ENCODE measurements at regions of chr13 and their contacts with region 1.

Region 1: DNA sequence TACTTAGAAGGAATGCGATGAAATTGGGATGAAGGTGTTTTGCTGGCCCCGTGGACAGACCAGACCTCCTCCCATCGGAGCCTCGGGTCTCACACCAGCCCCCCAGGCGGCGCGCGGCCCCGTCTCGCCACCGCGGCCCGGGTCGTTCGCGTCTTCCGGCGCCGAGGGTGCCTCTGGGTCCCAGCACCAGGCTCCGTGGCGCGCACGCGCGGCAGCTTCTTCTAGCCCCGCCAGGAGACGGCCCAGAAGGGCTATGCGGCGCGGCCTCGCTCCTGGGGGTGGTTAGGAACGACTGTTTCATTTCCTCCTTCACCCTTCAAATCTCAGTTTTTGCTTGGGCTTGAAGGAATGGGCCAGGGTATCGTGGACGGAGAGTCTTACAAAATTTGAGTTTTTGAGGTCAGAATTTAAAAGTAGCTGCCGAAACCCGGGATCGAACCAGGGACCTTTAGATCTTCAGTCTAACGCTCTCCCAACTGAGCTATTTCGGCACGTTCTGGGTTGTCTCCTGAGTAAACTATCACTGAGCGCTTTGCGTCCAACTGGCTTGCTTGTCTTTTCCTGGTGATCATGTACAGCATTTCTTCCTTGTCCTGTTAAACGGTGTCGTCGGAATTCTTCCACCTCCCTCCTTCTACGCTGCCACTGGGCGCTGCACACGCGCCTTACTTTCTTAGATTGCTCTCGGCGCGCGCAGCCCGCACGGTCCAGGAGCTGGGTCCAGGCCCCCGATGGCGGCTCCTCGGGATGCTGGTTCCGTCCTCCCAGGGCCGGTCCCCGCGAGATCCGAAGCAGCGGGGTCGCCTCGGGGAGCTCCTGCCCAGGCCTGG is 46.5 kb downstream of the TGDS start:
- DNase-seq: peak; percentile 92 to 94 (median 93)
- H3K4me3 ChIP-seq: peak overlapping the region; percentile 63 to 98
- H3K4me3 Mint-ChIP-seq: peak overlapping the region; percentile 88 to 95 (median 93)
- H3K27ac ChIP-seq: peak overlapping the region; percentile 87
- H3K27ac Mint-ChIP-seq: peak overlapping the region; percentile 94 to 100 (median 96)
- H3K4me1 ChIP-seq: peaks cover 15% of the 10 kb centered on the region
- H3K4me1 Mint-ChIP-seq: peaks cover 11 to 26% (median 17%) of the 10 kb centered on the region in 4 donors
- H3K27me3 ChIP-seq: no peaks in the 10 kb centered on the region
- H3K27me3 Mint-ChIP-seq: peaks cover 2 to 5% of the 10 kb centered on the region in 2 donors

Region 2: DNA sequence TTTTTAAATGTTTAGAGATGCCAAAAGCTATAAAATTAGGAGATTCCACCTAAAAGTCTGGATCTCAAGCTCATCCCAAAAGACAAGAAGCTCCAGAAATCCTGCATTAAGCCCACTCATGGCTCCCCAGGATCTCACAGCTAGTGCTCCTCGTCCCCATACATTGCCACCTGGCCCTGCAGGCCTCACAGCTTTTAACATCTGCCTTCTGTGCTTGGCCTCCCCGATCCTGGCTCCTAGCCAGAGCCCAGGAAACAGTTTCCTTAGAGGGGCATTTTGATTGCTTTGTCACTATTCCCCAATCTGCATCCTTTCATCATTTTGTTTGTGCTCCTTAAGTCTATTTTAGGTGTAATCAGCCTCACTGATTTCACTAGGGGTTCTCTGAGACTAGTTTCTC is 55.4 kb before region 1 on chr13:
- CTCF ChIA-PET with region 1: no interaction called
- POLR2A ChIA-PET with region 1: no interaction called
- intact Hi-C with region 1: no loop called
- DNase-seq: no peak
- H3K4me3 ChIP-seq: no peak overlapping the region
- H3K4me3 Mint-ChIP-seq: no peak overlapping the region
- H3K27ac ChIP-seq: no peak overlapping the region
- H3K27ac Mint-ChIP-seq: no peak overlapping the region
- H3K4me1 ChIP-seq: no peaks in the 10 kb centered on the region
- H3K4me1 Mint-ChIP-seq: no peaks in the 10 kb centered on the region
- H3K27me3 ChIP-seq: no peaks in the 10 kb centered on the region
- H3K27me3 Mint-ChIP-seq: no peaks in the 10 kb centered on the region

Region 3: DNA sequence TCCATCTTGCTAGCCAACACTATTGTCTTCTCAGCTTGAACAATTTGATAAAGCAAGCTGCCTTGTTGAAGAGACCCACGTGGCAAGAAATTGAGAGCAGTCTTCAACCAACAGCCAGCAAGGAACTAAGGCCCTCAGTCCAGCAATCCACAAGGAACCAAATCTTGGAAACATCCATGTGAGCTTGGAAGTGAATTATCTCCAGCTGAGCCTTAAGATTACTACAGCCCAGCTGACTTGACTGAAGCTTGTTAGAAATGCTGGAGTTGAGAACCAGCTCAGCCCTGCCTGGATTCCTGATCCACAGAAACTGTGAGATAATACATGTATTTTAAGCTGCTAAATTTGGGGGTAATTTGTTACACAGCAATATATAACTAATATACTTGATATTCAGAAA is 43.7 kb before region 1 on chr13:
- CTCF ChIA-PET with region 1: no interaction called
- POLR2A ChIA-PET with region 1: interaction called, 5 read pairs
- intact Hi-C with region 1: loop called (anchors 2 kb)
- DNase-seq: no peak
- H3K4me3 ChIP-seq: no peak overlapping the region
- H3K4me3 Mint-ChIP-seq: no peak overlapping the region
- H3K27ac ChIP-seq: no peak overlapping the region
- H3K27ac Mint-ChIP-seq: no peak overlapping the region
- H3K4me1 ChIP-seq: peaks cover 13% of the 10 kb centered on the region
- H3K4me1 Mint-ChIP-seq: peaks cover 4 to 14% (median 9%) of the 10 kb centered on the region in 4 donors
- H3K27me3 ChIP-seq: no peaks in the 10 kb centered on the region
- H3K27me3 Mint-ChIP-seq: peaks cover 7 to 13% of the 10 kb centered on the region in 2 donors

Region 4: GRCh38 chr13:94561126-94561525 is 11.7 kb after region 1 on chr13:
- CTCF ChIA-PET with region 1: interaction called, 5 read pairs
- POLR2A ChIA-PET with region 1: interaction called, 11 read pairs
- intact Hi-C with region 1: no loop called
- DNase-seq: no peak
- H3K4me3 ChIP-seq: no peak overlapping the region
- H3K4me3 Mint-ChIP-seq: no peak overlapping the region
- H3K27ac ChIP-seq: no peak overlapping the region
- H3K27ac Mint-ChIP-seq: peak overlapping the region in 1 of 7 donors; percentile 4
- H3K4me1 ChIP-seq: peaks cover 12% of the 10 kb centered on the region
- H3K4me1 Mint-ChIP-seq: peaks cover 14 to 20% (median 18%) of the 10 kb centered on the region in 4 donors
- H3K27me3 ChIP-seq: no peaks in the 10 kb centered on the region
- H3K27me3 Mint-ChIP-seq: no peaks in the 10 kb centered on the region

Region 5: GRCh38 chr13:94595950-94596574 is 46.6 kb after region 1 on chr13 and contains the start of gene TGDS:
- CTCF ChIA-PET with region 1: interaction called, 18 read pairs
- POLR2A ChIA-PET with region 1: interaction called, 96 read pairs
- intact Hi-C with region 1: loop called (anchors 1 kb)
- DNase-seq: peak; percentile 86 to 90 (median 88)
- H3K4me3 ChIP-seq: peak within 1 kb of the TSS; percentile 78 to 87
- H3K4me3 Mint-ChIP-seq: peak within 1 kb of the TSS; percentile 92 to 98 (median 94)
- H3K27ac ChIP-seq: peak within 1 kb of the TSS; percentile 75
- H3K27ac Mint-ChIP-seq: peak within 1 kb of the TSS; percentile 85 to 97 (median 94)
- H3K4me1 ChIP-seq: peaks cover 34% of the 10 kb centered on the region
- H3K4me1 Mint-ChIP-seq: peaks cover 28 to 43% (median 37%) of the 10 kb centered on the region in 4 donors
- H3K27me3 ChIP-seq: no peaks in the 10 kb centered on the region
- H3K27me3 Mint-ChIP-seq: no peaks in the 10 kb centered on the region
- total RNA-seq, gene TGDS: 15.9 to 16.8 TPM

Region 6: DNA sequence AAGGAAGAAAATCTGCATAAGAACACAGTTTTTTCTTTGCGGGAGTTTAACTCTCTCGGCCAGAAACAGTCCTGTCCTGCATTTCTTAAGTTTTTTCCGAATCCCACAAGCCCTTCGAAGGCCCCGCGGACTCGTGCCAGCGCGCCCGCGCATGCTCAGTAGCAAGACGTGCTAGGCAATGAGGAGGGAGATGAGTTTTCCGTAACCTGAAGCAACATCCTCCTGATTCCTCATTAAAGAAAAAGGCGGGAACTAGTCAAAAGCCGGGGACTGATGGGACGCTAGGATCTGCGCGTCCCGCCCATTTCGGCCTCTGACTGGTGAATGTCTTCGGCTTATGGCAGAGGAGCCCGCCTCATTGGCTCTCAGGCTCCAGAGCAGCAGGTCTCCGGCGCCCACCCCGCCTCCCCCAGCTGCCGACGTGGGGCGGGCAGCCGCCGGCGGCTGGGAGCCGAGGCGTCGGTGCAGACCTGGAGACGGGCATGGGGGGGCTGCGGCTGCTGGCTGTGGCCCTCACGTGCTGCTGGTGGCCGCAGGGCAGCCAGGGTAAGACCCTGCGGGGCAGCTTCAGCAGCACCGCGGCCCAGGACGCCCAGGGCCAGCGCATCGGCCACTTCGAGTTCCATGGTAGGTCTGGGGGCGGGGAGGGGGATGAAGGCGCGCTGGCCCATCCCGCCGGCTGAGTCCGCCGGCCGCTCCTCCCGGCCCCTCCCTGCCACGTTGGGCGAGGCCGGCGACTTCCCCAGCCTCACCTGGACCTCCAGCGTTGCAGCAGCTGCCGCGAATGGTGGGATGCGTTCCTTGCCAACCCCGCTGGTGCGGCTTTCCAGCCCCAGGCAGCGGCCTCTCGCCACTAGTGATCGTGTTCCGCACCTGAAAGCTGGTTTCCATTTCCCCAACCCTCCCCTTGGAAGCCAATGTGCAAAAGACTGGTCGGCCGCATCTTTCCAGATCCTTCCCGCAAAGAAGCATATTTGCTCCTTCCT is 52.3 kb after region 1 on chr13 and contains the start of gene GPR180:
- CTCF ChIA-PET with region 1: interaction called, 18 read pairs
- POLR2A ChIA-PET with region 1: interaction called, 96 read pairs
- intact Hi-C with region 1: loop called (anchors 1 kb)
- DNase-seq: peak; percentile 86 to 93 (median 89)
- H3K4me3 ChIP-seq: peak within 1 kb of the TSS; percentile 36 to 85
- H3K4me3 Mint-ChIP-seq: peak within 1 kb of the TSS; percentile 83 to 92 (median 86)
- H3K27ac ChIP-seq: peak within 1 kb of the TSS; percentile 57
- H3K27ac Mint-ChIP-seq: peak within 1 kb of the TSS; percentile 86 to 95 (median 92)
- H3K4me1 ChIP-seq: peaks cover 18% of the 10 kb centered on the region
- H3K4me1 Mint-ChIP-seq: peaks cover 22 to 36% (median 29%) of the 10 kb centered on the region in 4 donors
- H3K27me3 ChIP-seq: no peaks in the 10 kb centered on the region
- H3K27me3 Mint-ChIP-seq: no peaks in the 10 kb centered on the region
- total RNA-seq, gene GPR180: 4.8 to 5.3 TPM

Region 7: DNA sequence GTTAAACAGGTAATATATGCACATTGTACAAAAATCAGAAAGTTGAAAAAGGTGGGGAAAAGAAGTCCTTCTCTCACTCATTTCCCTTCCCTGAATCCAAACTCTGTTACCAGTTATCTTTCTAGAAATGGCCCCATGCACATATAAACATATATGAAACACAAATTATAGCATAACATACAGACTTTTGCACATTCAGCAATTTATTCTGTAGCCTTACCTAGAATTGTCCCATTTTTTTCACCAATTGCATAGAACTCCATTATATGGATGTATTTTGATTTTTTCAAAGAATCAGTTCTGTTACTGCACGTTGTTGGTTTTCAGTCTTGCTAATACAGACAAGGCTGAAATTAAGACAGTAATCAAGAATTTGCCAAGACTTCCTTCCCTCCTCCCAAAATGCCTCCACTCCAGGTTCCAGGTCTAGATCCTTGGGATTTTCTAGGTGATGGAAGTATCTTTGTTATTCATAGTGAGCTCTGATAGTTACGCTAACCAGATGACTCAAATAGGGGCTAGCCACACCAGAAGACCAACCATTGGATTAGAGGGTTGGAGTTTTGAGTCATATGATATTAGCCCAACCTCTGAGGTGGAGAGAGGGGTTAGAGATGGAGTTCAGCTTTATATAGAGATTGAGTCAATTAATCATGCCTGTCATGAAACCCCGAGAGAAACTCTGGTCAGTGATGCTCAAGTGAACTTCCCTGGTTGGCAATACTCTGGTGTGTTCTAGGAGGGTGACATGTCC is 83.0 kb after region 1 on chr13:
- CTCF ChIA-PET with region 1: no interaction called
- POLR2A ChIA-PET with region 1: no interaction called
- intact Hi-C with region 1: no loop called
- DNase-seq: no peak
- H3K4me3 ChIP-seq: no peak overlapping the region
- H3K4me3 Mint-ChIP-seq: no peak overlapping the region
- H3K27ac ChIP-seq: no peak overlapping the region
- H3K27ac Mint-ChIP-seq: peak overlapping the region in 1 of 7 donors; percentile 1
- H3K4me1 ChIP-seq: no peaks in the 10 kb centered on the region
- H3K4me1 Mint-ChIP-seq: no peaks in the 10 kb centered on the region
- H3K27me3 ChIP-seq: no peaks in the 10 kb centered on the region
- H3K27me3 Mint-ChIP-seq: no peaks in the 10 kb centered on the region

Region 8: GRCh38 chr13:94660695-94661326 is 111.4 kb after region 1 on chr13:
- CTCF ChIA-PET with region 1: no interaction called
- POLR2A ChIA-PET with region 1: no interaction called
- intact Hi-C with region 1: no loop called
- DNase-seq: no peak
- H3K4me3 ChIP-seq: no peak overlapping the region
- H3K4me3 Mint-ChIP-seq: no peak overlapping the region
- H3K27ac ChIP-seq: no peak overlapping the region
- H3K27ac Mint-ChIP-seq: no peak overlapping the region
- H3K4me1 ChIP-seq: no peaks in the 10 kb centered on the region
- H3K4me1 Mint-ChIP-seq: no peaks in the 10 kb centered on the region
- H3K27me3 ChIP-seq: no peaks in the 10 kb centered on the region
- H3K27me3 Mint-ChIP-seq: peaks cover 3 to 8% of the 10 kb centered on the region in 2 donors

Measured in CD4-positive, alpha-beta memory T cell (primary cell).